Activated CD4-positive, alpha-beta memory T cell treated with anti-CD3 and anti-CD28 coated beads, Interleukin-2, amount 10 ng/mL, durations not matched to agents 7 days and 5 days (primary cell): ENCODE measurements at regions of chr1 and their contacts with region 1.

Region 1: GRCh38 chr1:152034646-152035405 is 2.0 kb downstream of the S100A11 start:
- DNase-seq: peak; percentile 74
- H3K4me3 Mint-ChIP-seq: peak overlapping the region; percentile 95
- H3K27ac Mint-ChIP-seq: peak overlapping the region; percentile 95
- H3K4me1 Mint-ChIP-seq: peaks cover 52% of the 10 kb centered on the region
- H3K27me3 Mint-ChIP-seq: no peaks in the 10 kb centered on the region

Region 2: DNA sequence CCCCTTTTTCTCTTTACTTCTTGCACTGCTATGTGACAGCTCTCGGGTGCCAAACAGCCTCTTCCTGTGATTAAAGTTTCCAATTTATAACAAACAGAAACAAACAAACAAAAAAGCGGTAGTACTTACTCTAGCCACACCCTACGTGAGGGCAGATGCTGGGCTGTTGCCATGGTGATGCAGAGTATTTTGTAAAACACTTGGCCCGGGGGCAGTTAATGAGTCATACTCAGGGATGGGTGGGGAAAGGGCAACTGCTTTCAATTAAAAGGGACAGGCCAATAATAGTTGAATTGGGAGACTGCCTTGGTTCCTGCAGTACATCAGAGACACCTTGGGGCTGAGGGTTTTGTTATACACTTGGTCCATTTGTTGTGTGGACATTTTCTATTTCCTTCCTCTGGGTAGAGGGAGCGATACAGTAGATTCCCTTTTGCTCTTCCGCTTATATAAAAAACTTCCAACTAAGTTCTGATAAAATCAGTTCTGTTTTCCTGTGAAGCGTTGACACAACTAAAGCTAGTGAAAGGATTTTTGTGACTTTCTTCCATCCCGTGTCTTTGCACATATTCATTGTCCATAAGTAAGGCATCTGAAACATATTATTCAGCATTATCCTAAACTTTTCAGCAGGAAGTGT is 89.0 kb before region 1 on chr1:
- CTCF ChIA-PET with region 1: interaction called, 3 read pairs
- POLR2A ChIA-PET with region 1: interaction called, 18 read pairs
- DNase-seq: peak; percentile 90
- H3K4me3 Mint-ChIP-seq: peak overlapping the region; percentile 56
- H3K27ac Mint-ChIP-seq: peak overlapping the region; percentile 88
- H3K4me1 Mint-ChIP-seq: peaks cover 41% of the 10 kb centered on the region
- H3K27me3 Mint-ChIP-seq: no peaks in the 10 kb centered on the region

Region 3: DNA sequence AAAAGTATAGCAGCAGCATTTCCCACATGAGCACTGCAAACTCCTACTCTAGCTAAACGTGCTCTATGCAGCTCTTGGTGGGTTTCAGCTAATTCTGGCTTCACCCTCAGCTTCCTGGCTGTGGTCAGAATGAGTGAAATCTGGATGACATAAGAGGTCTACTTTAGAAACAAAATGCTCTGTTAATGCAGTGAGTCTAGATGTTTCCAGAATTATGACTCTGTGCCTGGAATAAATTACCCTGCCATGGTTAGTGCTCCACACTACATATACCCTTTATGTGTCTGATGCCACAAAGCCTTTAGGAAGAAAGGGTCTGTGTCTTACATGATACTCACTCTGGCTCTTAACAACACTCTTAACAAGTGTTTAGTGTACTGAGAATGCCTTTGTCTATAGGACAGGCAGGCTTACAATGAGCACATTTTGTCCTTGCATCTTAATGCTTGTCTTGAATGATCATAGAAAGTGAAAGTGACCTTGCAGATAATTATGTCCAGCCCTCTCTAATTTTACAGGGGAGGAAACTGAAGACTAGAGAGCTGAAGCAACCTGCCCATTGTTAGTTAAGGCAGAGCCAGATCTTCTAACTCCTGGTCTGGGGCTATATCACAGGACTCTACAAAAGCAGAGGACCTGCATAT is 50.4 kb before region 1 on chr1:
- CTCF ChIA-PET with region 1: no interaction called
- POLR2A ChIA-PET with region 1: interaction called, 19 read pairs
- DNase-seq: peak; percentile 60
- H3K4me3 Mint-ChIP-seq: peak overlapping the region; percentile 7
- H3K27ac Mint-ChIP-seq: peak overlapping the region; percentile 76
- H3K4me1 Mint-ChIP-seq: peaks cover 63% of the 10 kb centered on the region
- H3K27me3 Mint-ChIP-seq: no peaks in the 10 kb centered on the region

Region 4: DNA sequence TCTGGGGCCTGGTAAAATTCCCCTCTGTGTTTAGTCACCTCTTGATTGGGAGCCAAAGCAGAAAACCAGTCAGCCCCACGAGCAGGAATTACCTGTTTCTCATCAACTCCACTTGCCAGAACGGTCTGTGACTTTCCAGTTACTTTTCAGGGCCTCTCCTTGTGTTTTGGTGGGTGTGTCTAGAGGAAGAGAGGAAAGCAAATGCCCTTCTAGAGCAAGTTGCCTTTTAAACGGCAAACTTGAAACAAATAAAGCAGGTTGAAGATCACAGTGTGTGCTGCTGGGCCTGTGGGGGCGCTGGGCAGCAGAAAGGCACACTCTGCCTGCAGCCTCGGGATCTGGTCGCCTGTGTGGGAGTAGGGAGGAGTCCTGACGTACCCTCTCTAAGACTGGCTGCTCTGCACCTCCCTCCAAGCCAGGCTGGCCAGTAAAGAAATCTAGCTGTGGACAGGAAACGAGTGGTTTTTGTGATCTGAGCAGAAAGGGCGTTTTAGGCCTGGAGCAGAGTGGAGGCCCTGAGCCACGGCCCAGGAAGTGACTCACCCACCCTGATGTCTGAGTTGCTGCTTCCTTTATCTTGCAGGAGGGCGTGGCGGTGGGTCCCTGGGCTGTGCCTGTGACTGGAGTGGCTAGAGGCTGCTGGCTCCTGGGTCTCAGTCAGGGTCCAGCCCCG is 13.0 kb after region 1 on chr1:
- CTCF ChIA-PET with region 1: interaction called, 117 read pairs
- POLR2A ChIA-PET with region 1: interaction called, 162 read pairs
- DNase-seq: peak; percentile 93
- H3K4me3 Mint-ChIP-seq: peak overlapping the region; percentile 73
- H3K27ac Mint-ChIP-seq: peak overlapping the region; percentile 97
- H3K4me1 Mint-ChIP-seq: peaks cover 55% of the 10 kb centered on the region
- H3K27me3 Mint-ChIP-seq: peaks cover 4% of the 10 kb centered on the region

Region 5: DNA sequence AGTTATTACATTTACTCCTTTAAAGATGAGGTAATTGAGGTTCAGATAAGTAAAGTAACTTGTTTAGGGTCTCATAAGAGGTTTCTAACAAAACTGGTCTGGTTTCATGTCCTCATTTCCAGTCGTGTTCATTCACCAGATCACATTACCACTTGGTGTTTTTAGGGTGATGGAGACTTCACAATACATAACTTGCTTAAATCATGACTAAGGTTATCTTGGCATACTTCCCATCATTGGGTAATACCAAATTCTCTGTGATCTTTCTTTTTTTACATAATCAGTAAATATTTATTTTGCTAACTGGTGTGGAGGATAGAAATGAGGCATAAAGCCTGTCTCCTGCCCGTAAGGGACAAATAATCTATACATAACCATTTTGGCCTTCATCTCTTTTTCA is 155.8 kb after region 1 on chr1:
- CTCF ChIA-PET with region 1: no interaction called
- POLR2A ChIA-PET with region 1: no interaction called
- DNase-seq: no peak
- H3K4me3 Mint-ChIP-seq: no peak overlapping the region
- H3K27ac Mint-ChIP-seq: no peak overlapping the region
- H3K4me1 Mint-ChIP-seq: peaks cover 9% of the 10 kb centered on the region
- H3K27me3 Mint-ChIP-seq: peaks cover 32% of the 10 kb centered on the region